Right cardiac atrium (tissue), 5 donors: ENCODE measurements at regions of chr1 and their contacts with region 1.

Region 1: DNA sequence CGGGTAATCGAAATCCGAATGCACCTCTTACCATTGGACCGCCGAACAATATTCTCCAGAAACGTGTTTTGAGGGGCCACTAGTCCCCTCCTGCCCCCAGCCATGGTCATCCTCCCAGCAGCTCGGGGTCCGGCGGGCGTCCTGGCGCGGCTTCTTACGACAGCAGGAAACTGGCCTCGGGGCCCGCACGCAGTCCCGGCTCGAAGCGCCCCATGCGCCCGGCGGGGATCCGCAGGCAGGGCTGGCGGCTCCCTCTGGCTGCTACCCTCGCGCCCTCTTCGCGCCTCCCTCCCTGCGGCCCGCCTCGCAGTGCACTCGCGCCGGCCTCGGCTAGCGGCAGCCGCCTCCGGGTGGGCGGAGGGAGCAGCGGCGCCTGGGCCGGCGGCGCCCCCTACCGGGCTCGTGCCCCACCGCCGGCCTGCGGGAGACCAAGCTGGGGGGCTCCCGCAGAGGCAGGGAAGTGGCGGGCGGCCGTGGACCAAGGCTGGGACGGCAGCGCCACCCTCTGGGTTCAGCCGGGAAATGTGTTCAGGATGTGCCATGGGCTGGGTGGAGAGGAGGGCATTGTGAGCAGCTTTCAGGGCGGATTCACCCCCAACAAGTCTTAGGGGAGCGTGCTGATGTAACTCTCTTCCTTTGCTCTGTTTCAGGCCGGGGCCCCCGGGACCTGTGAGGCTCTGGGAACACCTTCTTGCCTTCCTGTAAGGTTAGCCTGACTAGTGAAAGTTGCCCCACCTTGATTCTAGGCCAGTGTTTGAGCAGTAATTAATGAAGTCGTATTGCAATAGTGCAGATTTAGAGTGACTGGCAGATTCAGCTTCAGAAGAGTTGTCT is at the start of gene KCNH1:
- DNase-seq: peak; percentile 80 to 90 (median 88)
- ATAC-seq: peak; percentile 97 to 99
- H3K4me3 ChIP-seq: peak within 1 kb of the TSS; percentile 48
- H3K27ac ChIP-seq: no peak within 1 kb of the TSS
- H3K4me1 ChIP-seq: no peaks in the 10 kb centered on the region
- H3K27me3 ChIP-seq: peaks cover 6% of the 10 kb centered on the region
- total RNA-seq, gene KCNH1: not detected

Region 2: DNA sequence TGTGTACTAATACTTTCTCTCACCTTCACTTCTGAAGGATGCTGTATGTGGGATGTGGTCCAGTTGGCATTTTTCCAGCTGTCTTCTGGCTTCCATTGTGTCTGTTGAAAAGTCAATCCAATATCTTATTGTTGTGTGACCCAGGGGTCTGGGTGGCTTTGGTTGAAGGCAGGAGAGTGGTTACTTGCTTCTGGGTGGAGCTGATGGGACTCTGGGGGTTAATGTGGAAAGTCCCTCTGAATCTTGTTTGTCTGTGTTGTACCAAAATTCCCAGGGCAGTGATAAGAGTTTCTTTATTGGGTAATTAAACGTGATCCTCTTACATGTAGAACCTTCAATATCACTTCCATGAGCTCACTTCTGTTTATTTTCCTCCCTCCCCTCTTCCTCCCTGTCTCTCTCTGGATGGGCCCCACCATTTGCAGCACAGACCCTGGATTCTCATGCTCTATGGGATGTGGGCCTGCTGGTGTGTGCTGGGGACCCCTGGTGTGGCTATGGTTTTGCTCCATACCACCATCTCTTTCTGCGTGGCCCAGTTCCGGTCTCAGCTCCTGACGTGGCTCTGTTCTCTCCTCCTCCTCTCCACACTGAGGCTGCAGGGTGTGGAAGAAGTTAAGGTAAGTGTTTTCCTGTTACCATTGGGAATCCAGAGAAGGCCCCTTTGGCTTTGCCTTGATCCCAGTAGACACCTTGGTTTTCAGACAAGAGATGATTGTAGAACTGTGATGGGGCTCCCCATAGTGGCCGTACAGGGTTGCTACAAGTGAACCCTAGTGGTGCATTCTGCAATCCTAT is 733.8 kb before region 1 on chr1:
- intact Hi-C with region 1: loop called in 2 of 4 experiments (anchors 5 to 10 kb)
- DNase-seq: peak; percentile 44 to 74 (median 68)
- ATAC-seq: peak; percentile 91 to 94
- H3K4me3 ChIP-seq: no peak overlapping the region
- H3K27ac ChIP-seq: no peak overlapping the region
- H3K4me1 ChIP-seq: peaks cover 2% of the 10 kb centered on the region
- H3K27me3 ChIP-seq: no peaks in the 10 kb centered on the region

Region 3: DNA sequence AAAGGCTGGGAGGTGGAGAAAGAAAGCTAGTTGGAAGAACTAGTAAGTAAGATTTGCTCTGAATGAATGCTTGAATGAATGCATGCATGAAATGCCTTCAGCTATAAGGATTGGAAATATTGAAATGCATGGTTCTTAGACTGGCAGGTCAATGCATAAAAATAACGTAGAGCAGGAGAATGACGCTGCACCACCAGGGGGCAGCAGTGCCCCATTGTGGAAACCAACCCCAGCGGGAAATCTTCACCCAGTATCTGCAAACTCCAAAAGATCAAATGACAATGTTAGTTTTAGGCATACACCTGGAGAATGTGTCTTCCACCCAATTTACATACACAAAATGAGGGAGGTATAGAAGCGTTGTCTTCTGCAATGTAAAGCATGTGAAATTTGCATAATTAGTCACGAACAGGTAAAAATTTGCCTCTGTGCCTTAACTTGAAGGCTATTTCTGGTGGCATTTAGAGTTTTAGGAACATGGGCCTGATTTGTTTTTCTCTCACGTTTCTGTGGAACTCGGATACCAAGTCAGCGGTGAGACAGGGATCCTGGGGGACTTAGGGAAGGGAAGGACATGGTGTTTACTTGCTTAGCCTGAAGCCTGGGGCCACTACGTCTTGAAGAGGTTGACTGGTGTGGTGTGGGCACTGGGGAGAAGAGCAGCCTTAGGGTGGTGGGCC is 726.7 kb before region 1 on chr1:
- intact Hi-C with region 1: loop called in 3 of 4 experiments (anchors 2 to 10 kb)
- DNase-seq: peak; percentile 59 to 88 (median 80)
- ATAC-seq: peak in 1 of 2 donors; percentile 70
- H3K4me3 ChIP-seq: no peak overlapping the region
- H3K27ac ChIP-seq: no peak overlapping the region
- H3K4me1 ChIP-seq: no peaks in the 10 kb centered on the region
- H3K27me3 ChIP-seq: no peaks in the 10 kb centered on the region

Region 4: DNA sequence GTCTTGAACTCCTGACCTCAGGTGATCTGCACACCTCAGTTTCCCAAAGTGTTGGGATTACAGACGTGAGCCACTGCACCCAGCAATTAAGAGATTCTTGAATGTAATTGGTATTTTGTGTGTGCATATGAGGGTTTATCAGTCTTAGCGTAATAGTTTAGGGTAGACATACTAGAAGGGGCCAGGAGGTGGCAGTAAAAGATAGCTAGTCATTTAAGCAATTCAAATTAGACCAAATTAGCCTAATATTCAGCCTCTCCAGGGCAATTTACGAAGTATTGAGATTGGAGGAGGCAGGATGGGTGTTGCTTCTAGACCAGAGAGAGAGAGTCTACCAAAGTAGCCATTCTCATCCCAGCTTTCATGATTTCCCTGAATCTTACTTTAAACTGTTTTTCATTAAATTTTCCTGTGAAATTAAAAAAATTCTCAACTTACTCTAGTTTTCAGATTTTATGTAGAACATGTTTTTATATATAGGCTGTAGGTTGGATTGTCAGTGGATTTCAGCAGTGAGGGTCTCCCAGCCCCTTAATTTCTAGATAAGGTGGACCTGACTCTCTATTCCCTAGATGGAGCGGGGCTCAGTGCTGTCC is 685.7 kb before region 1 on chr1:
- intact Hi-C with region 1: loop called in 3 of 4 experiments (anchors 2 kb)
- DNase-seq: no peak
- ATAC-seq: peak in 1 of 2 donors; percentile 66
- H3K4me3 ChIP-seq: no peak overlapping the region
- H3K27ac ChIP-seq: no peak overlapping the region
- H3K4me1 ChIP-seq: no peaks in the 10 kb centered on the region
- H3K27me3 ChIP-seq: no peaks in the 10 kb centered on the region

Region 5: DNA sequence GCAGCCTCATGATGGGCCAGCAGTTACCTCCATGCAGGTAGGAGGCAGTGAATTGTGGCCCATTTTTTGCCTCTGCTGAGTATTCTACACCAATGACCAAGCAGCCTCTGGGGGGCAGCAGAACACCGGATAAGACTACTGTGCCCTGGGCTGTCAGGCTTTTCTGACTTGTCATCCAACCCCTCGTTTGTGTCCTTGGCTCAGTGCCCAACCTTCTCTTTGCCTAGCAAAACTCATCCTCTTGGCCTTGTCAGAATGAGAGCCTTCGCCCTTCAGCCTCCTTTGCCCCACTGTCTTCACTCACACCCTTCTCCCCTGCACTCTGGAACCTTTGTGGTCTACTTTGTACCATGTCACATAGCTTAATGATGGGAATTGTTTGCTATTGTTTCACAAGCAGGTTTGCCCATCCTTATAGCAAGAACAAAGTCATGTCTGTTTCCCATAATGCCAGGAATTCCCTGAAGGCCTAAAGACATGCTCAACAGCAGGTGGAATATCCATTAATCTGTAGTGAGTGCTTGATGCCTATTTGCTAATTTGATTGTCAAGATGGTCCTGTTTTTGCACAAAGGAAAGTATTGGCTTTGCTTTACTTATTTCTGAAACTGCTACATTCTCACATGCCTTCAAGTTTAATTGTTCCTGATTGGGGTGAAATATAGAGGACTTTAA is 549.5 kb before region 1 on chr1:
- intact Hi-C with region 1: loop called (anchors 2 to 10 kb)
- DNase-seq: peak; percentile 77 to 89 (median 83)
- ATAC-seq: peak; percentile 78 to 86
- H3K4me3 ChIP-seq: no peak overlapping the region
- H3K27ac ChIP-seq: no peak overlapping the region
- H3K4me1 ChIP-seq: no peaks in the 10 kb centered on the region
- H3K27me3 ChIP-seq: no peaks in the 10 kb centered on the region

Region 6: DNA sequence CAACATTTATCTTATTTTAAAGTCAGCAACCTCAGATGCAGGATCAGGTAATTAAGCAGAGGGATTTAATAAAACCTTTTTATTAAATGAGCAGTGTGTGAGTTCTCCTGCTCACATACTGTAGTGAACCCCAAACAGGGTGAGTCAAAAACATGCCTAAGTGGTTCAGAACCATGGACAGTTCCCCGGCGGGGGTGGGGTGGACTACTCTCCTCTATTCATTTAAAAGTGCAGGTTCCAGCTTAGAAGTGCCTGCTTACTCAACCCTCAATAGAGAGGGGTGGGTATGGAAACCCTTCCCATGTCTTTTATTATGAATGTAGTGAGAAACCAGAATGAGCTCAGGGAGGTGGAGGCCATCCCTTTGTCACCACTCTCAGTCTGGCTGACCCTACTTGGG is 407.4 kb before region 1 on chr1:
- intact Hi-C with region 1: no loop called
- DNase-seq: peak in 1 of 3 donors; percentile 58
- ATAC-seq: no peak
- H3K4me3 ChIP-seq: no peak overlapping the region
- H3K27ac ChIP-seq: no peak overlapping the region
- H3K4me1 ChIP-seq: no peaks in the 10 kb centered on the region
- H3K27me3 ChIP-seq: no peaks in the 10 kb centered on the region